ENCODE measurements at regions of chr10 and their contacts with region 1.

Region 1: GRCh38 chr10:118568327-118568848 is 27.1 kb downstream of the PRLHR start:
- DNase-seq: no peak

Region 2: GRCh38 chr10:117830787-117831212 is 737.6 kb before region 1 on chr10:
- intact Hi-C with region 1: loop called in 1 of 2 experiments (anchors 5 kb)
- DNase-seq: no peak

Region 3: GRCh38 chr10:118633786-118634185 is 65.4 kb after region 1 on chr10:
- intact Hi-C with region 1: loop called in 1 of 2 experiments (anchors 2 kb)
- DNase-seq: no peak

Region 4: DNA sequence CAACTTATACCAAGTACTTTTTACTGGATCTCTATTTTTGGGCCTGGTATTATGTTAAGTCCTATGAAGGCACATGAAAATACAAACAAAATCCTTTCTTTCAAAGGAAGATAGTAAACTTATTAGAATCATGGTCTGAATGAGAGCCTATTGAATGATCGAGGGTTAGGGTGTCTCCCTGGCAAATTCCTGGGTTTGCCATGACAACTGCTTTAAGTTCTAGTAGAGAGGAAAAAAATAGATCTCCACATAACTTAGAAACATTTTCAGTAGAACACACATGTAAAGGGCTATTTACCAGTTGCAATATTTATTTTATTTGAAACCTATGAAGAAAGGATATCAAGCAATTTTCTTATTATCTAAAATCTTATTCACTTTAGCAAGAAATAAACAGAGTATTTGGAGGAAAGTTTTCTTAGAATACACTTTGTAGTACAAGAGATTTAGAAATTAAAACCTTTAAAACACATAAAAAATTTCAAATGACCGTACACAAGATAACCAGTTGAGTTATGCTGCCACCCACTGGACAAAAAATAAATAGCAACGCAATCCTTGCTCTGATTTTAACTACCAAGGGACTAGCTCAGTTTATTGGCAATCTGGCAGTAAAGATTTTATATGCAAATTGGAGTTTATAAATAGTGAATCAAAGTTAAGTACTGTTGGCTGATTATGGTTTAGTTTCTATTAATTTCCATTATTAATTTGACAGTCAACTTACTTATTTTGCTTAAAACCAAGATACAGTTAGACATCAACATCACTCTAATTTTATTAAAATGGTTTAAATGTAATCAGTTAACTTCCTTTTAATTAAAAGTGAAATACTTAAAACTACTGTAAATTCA is 152.5 kb after region 1 on chr10:
- intact Hi-C with region 1: loop called (anchors 5 to 10 kb)
- DNase-seq: no peak

Region 5: GRCh38 chr10:118775478-118775877 is 207.1 kb after region 1 on chr10:
- intact Hi-C with region 1: no loop called
- DNase-seq: no peak

Measured in posterior vena cava (tissue), 2 donors.